ENCODE measurements at regions of chr5 and their contacts with region 1.

Region 1: GRCh38 chr5:165457859-165458481 is 1952.6 kb downstream of the MAT2B start:
- DNase-seq: peak; percentile 55
- ATAC-seq: peak; percentile 81
- H3K4me3 ChIP-seq: no peak overlapping the region
- H3K27ac ChIP-seq: no peak overlapping the region
- H3K4me1 ChIP-seq: no peaks in the 10 kb centered on the region
- H3K27me3 ChIP-seq: no peaks in the 10 kb centered on the region
- CTCF ChIP-seq: peak; percentile 54
- POLR2A ChIP-seq: no peak
- RAD21 ChIP-seq: peak; percentile 62

Region 2: GRCh38 chr5:163564321-163564938 is 1893.5 kb before region 1 on chr5:
- CTCF ChIA-PET with region 1: interaction called, 6 read pairs
- POLR2A ChIA-PET with region 1: no interaction called
- dilution Hi-C with region 1: no loop called
- in situ Hi-C with region 1: loop called (anchors 25 kb)
- intact Hi-C with region 1: loop called (anchors 5 kb)
- DNase-seq: peak; percentile 69
- ATAC-seq: peak; percentile 68
- H3K4me3 ChIP-seq: no peak overlapping the region
- H3K27ac ChIP-seq: no peak overlapping the region
- H3K4me1 ChIP-seq: peaks cover 5% of the 10 kb centered on the region
- H3K27me3 ChIP-seq: no peaks in the 10 kb centered on the region
- CTCF ChIP-seq: peak; percentile 89
- POLR2A ChIP-seq: no peak
- RAD21 ChIP-seq: peak; percentile 91

Region 3: DNA sequence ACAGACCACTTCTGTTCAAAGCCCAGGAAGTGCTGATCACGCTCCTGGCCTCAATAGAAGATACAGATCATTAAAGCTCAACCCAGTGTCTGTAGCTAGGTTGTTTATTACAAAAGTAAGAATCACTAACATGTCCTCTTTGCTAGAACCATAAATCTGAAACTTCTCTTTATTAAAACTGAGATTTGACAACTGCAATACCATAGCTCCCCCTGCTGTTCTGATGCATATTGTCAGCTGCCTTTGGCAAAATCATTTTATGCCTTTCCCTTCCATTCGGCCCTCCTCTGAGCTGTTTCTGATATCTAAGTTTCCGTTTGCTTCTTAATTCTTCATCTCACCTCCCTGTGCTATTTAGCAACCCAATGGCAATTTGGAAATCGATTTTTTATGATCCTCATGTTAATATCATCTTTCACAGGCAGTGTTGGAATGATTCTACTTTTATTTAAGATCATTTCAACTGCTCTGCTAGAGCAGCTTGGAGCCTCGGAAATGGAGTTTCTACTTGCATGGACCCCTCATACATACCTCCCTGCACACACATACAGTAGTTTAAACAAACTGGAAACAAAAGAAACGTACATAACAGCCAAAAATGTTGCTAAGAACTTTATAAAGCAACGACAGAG is 953.7 kb before region 1 on chr5:
- CTCF ChIA-PET with region 1: no interaction called
- POLR2A ChIA-PET with region 1: no interaction called
- dilution Hi-C with region 1: no loop called
- in situ Hi-C with region 1: no loop called
- intact Hi-C with region 1: loop called (anchors 10 kb)
- DNase-seq: peak; percentile 69
- ATAC-seq: peak; percentile 89
- H3K4me3 ChIP-seq: no peak overlapping the region
- H3K27ac ChIP-seq: no peak overlapping the region
- H3K4me1 ChIP-seq: no peaks in the 10 kb centered on the region
- H3K27me3 ChIP-seq: no peaks in the 10 kb centered on the region
- CTCF ChIP-seq: peak; percentile 93
- POLR2A ChIP-seq: no peak
- RAD21 ChIP-seq: peak; percentile 94

Region 4: DNA sequence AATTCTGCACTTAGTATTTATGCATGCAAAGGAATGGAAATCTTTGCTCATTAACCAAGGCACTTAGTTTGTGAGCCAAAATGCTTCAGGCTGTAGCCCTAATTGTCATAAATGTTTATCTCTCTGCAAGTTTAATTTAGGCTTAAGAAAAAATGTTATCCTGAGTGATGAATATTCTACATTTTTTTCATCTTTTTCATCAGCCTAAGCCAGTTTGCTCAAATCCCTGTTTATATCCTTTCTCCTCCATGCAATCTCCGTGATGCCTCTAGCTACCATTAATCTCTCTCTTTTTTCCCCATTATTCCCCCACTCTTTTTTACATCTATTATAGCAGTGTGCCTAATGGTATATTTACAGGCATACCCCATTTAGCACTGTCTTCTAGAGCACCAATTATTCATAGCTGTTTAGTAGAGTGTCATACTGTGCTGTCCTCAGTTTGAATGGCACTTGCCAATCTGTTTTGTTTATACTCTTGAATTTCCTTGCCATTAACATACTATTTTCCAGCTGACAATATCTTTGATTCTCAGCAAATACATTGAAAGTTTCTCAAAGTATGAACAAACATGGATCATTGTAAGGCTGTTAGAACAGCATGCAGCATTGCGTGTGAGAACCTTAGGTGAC is 495.5 kb before region 1 on chr5:
- CTCF ChIA-PET with region 1: no interaction called
- POLR2A ChIA-PET with region 1: no interaction called
- dilution Hi-C with region 1: no loop called
- in situ Hi-C with region 1: no loop called
- intact Hi-C with region 1: loop called (anchors 5 kb)
- DNase-seq: no peak
- ATAC-seq: peak; percentile 74
- H3K4me3 ChIP-seq: no peak overlapping the region
- H3K27ac ChIP-seq: no peak overlapping the region
- H3K4me1 ChIP-seq: no peaks in the 10 kb centered on the region
- H3K27me3 ChIP-seq: no peaks in the 10 kb centered on the region
- CTCF ChIP-seq: no peak
- POLR2A ChIP-seq: no peak
- RAD21 ChIP-seq: no peak

Region 5: GRCh38 chr5:165209086-165209727 is 248.8 kb before region 1 on chr5:
- CTCF ChIA-PET with region 1: no interaction called
- POLR2A ChIA-PET with region 1: no interaction called
- dilution Hi-C with region 1: no loop called
- in situ Hi-C with region 1: no loop called
- intact Hi-C with region 1: loop called (anchors 2 kb)
- DNase-seq: peak; percentile 37
- ATAC-seq: no peak
- H3K4me3 ChIP-seq: no peak overlapping the region
- H3K27ac ChIP-seq: no peak overlapping the region
- H3K4me1 ChIP-seq: no peaks in the 10 kb centered on the region
- H3K27me3 ChIP-seq: no peaks in the 10 kb centered on the region
- CTCF ChIP-seq: peak; percentile 61
- POLR2A ChIP-seq: no peak
- RAD21 ChIP-seq: peak; percentile 37

Region 6: DNA sequence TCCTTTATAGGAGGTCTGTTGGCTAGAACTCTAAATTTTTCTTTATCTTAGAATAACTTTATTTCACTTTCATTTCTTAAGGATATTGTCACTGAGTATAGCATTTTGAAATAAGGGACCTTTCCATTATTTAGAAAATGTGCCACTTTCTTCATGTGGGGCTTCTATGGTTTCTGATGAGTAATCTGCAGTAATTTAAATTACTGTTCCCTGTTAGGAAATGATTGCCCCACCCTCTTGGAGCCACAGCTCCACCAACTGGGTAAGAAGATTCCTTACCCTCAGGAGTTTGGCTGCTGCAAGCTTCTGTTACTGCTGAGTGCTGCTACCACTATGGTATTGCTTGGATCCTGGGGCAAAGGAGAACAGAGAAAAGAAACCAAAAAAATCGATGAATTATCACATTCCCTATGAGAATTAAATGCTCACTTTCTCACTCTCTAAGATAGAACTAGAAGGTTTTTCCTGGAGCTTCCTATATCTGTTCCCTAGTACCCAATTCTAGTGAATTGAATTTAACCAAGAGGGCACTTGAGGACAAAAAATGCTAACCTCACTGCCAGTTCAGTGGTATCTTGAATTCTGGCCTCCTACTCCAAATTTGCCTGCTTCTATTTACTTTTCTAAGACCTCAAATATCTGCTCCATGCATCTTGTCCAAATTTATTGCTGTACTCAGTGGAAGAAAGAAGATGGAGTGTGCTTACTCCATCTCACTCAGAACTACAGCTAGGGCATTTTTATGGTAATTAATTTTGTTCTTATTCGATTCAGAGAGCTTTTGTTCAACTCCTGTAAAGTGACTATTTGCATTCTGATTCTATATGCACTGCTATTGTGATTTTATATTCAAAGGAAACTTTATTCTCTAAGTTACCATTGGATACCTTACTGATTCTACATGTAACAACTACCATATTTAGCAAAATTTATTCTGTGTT is 158.8 kb after region 1 on chr5:
- CTCF ChIA-PET with region 1: no interaction called
- POLR2A ChIA-PET with region 1: no interaction called
- dilution Hi-C with region 1: no loop called
- in situ Hi-C with region 1: no loop called
- intact Hi-C with region 1: loop called (anchors 5 kb)
- DNase-seq: peak; percentile 62
- ATAC-seq: peak; percentile 90
- H3K4me3 ChIP-seq: no peak overlapping the region
- H3K27ac ChIP-seq: no peak overlapping the region
- H3K4me1 ChIP-seq: peaks cover 2% of the 10 kb centered on the region; the same call in 1 of the 2 replicates
- H3K27me3 ChIP-seq: no peaks in the 10 kb centered on the region
- CTCF ChIP-seq: peak; percentile 43
- POLR2A ChIP-seq: no peak
- RAD21 ChIP-seq: peak; percentile 35; the same call in 1 of the 2 replicates

Measured in IMR-90 (cell line).